ENCODE measurements at regions of chr10 and their contacts with region 1.

Region 1: GRCh38 chr10:106320078-106320477 is 844.4 kb downstream of the SORCS1 start:
- DNase-seq: no peak
- ATAC-seq: no peak
- H3K4me3 ChIP-seq: no peak overlapping the region
- H3K27ac ChIP-seq: no peak overlapping the region
- H3K4me1 ChIP-seq: no peaks in the 10 kb centered on the region
- H3K27me3 ChIP-seq: no peaks in the 10 kb centered on the region
- CTCF ChIP-seq: no peak

Region 2: DNA sequence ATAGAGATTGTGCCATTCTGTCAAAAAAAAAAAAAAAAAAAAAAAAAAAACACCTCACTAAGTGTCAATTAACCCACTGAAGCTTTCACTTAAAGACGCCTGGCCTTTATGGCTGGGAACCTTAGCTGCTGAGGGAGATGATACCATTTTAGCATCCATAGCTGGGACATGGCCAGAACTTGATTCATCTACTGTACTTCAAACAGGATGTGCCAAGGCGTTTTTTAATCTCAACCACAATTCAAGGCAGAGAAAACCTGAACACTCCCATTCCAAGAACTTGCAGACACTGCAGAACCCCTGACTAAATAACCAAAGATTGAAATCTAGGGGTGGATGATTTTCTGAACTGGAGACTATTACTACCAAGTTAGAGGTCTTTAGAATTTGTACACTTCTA is 152.1 kb before region 1 on chr10:
- CTCF ChIA-PET with region 1: no interaction called
- POLR2A ChIA-PET with region 1: no interaction called
- in situ Hi-C with region 1: no loop called
- intact Hi-C with region 1: no loop called
- DNase-seq: no peak
- ATAC-seq: no peak
- H3K4me3 ChIP-seq: no peak overlapping the region
- H3K27ac ChIP-seq: no peak overlapping the region
- H3K4me1 ChIP-seq: no peaks in the 10 kb centered on the region
- H3K27me3 ChIP-seq: no peaks in the 10 kb centered on the region
- CTCF ChIP-seq: no peak

Region 3: GRCh38 chr10:106380706-106381105 is 60.6 kb after region 1 on chr10:
- CTCF ChIA-PET with region 1: no interaction called
- POLR2A ChIA-PET with region 1: interaction called, 13 read pairs
- in situ Hi-C with region 1: no loop called
- intact Hi-C with region 1: no loop called
- DNase-seq: no peak
- ATAC-seq: no peak
- H3K4me3 ChIP-seq: no peak overlapping the region
- H3K27ac ChIP-seq: no peak overlapping the region
- H3K4me1 ChIP-seq: no peaks in the 10 kb centered on the region
- H3K27me3 ChIP-seq: no peaks in the 10 kb centered on the region
- CTCF ChIP-seq: no peak

Region 4: GRCh38 chr10:106535304-106535964 is 215.4 kb after region 1 on chr10:
- CTCF ChIA-PET with region 1: no interaction called
- POLR2A ChIA-PET with region 1: no interaction called
- in situ Hi-C with region 1: no loop called
- intact Hi-C with region 1: no loop called
- DNase-seq: no peak
- ATAC-seq: no peak
- H3K4me3 ChIP-seq: no peak overlapping the region
- H3K27ac ChIP-seq: no peak overlapping the region
- H3K4me1 ChIP-seq: no peaks in the 10 kb centered on the region
- H3K27me3 ChIP-seq: no peaks in the 10 kb centered on the region
- CTCF ChIP-seq: no peak